ENCODE measurements at regions of chr3 and their contacts with region 1.

Region 1: GRCh38 chr3:52428151-52429005 is 16.5 kb downstream of the SEMA3G start:
- DNase-seq: peak; percentile 70
- H3K4me3 ChIP-seq: no peak overlapping the region; a peak in 1 of 4 replicates
- H3K27ac ChIP-seq: no peak overlapping the region
- H3K4me1 ChIP-seq: peaks cover 0 to 3% of the 10 kb centered on the region in 2 experiments; a peak in 1 of 4 replicates
- H3K27me3 ChIP-seq: no peaks in the 10 kb centered on the region
- CTCF ChIP-seq: peak; percentile 85
- EP300 ChIP-seq: no peak
- RAD21 ChIP-seq: peak; percentile 85

Region 2: GRCh38 chr3:52407779-52408178 is 20.6 kb before region 1 on chr3:
- CTCF ChIA-PET with region 1: interaction called, 44 read pairs
- POLR2A ChIA-PET with region 1: no interaction called
- DNase-seq: peak; percentile 11
- H3K4me3 ChIP-seq: no peak overlapping the region
- H3K27ac ChIP-seq: no peak overlapping the region
- H3K4me1 ChIP-seq: peaks cover 3 to 32% of the 10 kb centered on the region in 2 experiments; a peak in 3 of 4 replicates
- H3K27me3 ChIP-seq: no peaks in the 10 kb centered on the region
- CTCF ChIP-seq: no peak
- EP300 ChIP-seq: no peak
- RAD21 ChIP-seq: no peak

Region 3: DNA sequence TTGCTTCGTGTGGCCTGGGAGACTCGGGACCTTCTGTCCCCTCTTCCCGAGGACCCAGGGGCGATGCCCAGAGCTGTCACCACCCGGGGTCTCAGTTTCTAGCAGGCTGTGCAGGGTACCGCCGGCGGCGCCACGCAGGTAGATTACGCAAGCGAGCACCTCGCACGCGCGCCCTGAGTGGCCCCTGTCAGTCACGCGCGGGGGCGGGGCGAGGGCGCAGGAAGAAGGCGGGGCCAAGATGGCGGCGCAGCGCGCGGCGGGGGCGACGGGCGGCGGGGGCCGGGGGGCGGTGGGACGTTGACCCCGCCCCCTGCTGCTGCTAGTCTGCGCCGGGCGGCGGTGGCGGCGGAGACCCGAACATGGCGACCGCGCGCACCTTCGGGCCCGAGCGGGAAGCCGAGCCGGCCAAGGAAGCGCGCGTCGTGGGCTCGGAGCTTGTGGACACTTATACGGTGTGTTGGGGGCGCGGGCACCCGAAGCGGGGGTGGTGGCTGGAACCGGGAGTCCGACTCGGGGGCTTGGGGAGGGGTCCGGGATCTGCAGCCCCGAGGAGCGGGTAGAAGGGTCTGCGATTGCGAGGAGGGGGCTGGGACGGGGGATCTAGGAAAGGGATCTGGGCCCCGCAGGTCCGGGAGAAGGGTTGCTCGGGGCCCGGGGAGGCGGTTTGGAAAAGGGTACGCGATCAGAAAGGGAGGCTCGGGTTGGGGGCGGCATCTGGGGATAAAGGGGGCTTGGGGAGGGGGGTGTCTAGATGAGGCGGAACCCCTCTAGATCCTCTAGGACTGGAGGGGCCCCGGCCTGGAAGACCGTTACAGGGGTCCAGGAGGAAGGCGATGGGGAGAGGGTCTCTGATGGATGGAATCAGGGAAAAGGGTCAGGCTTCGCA is 27.1 kb after region 1 on chr3 and contains the start of gene NISCH:
- CTCF ChIA-PET with region 1: interaction called, 578 read pairs
- POLR2A ChIA-PET with region 1: no interaction called
- DNase-seq: peak; percentile 99
- H3K4me3 ChIP-seq: peak within 1 kb of the TSS; percentile 89
- H3K27ac ChIP-seq: peak within 1 kb of the TSS; percentile 52 to 81; a peak in 3 of 4 replicates
- H3K4me1 ChIP-seq: peaks cover 8 to 26% of the 10 kb centered on the region in 2 experiments
- H3K27me3 ChIP-seq: no peaks in the 10 kb centered on the region
- CTCF ChIP-seq: no peak
- EP300 ChIP-seq: no peak
- RAD21 ChIP-seq: no peak
- polyA plus RNA-seq, gene NISCH: 77.5 and 95.1 TPM in 2 replicates